ENCODE measurements at regions of chr1 and their contacts with region 1.

Region 1: GRCh38 chr1:20633190-20634064 is at the start of gene PINK1:
- DNase-seq: peak; percentile 91

Region 2: DNA sequence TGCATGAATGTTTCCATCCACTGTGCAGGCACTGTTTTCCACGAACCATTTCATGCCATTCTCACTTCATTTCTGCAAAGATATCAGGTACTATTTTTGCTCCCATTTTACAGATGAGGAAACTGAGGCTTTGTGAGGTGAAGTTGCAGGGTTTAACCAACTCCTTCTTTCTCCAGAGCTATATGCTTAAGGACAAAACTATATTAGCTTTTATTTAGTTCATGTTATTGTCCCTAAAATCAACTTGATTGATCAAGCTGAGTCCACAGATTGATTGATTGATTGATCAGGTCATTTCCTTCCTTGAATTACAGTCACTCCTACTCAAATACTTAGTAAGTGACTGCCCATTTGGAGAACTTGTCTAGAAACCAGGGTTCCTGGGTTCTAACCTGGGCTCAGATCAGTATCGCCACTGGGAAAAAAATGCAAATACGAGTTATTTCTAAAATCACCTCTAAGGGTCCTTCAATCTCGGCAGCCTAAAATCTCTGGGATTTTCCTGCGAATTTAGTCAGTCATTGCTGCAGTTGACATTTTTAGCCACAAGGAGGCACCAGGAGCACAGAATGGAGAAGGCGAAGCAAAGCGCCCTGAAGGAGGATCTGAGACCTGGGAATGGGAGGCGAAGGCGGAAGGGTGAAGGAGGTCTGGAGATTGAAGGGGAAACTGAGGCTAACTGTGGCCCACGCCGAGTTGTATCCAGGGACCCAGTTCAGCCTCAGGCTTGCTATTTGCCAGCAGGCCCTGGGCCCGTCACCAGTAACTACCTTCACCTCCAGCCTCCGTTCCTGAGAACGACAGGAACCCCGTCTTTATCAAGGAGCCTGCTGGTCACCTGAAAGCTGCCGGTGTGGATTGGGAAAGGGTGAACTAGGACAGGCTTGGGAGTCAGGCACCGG is 111.2 kb before region 1 on chr1:
- CTCF ChIA-PET with region 1: interaction called, 3 read pairs
- POLR2A ChIA-PET with region 1: interaction called, 12 read pairs
- DNase-seq: peak; percentile 81

Region 3: DNA sequence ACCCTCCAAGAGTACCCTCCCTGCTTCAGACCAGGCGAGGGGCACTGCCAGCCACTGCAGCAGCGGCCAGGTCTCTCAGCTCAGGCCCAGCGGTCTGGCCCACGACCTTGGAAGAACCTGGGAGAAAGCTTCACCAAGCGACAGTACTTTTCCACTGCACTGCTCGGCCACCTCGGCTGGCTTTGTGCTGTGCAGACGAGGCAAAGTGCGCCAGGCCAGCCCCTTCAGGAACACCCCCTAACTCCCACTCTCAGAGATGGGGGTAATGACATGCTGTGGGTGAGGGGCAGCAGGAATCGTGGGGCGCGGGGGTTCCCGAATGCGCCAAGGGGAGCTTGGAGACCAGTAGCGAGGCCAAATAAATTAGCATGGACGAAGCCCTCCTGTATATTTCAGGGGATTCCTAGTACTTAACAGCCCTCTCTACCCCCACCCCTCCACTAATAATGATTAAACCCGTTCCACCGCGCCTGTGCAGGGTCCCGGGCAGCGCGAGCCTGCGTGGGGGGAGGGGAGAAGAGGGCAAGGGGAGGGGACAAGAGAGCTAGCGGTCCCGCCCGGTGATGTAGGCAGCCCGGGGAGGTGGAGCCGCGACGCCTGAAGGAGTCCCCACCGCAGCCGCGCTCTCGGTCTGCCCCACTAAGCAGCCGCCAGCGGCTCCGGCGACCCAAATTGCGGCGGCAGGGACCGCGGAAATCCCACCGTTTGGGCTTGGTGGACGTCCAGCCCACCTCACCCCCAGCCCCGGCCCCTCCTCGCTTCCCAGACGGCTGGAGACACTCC is 81.3 kb before region 1 on chr1 and contains the start of gene FAM43B:
- CTCF ChIA-PET with region 1: interaction called, 3 read pairs
- POLR2A ChIA-PET with region 1: interaction called, 17 read pairs
- DNase-seq: peak; percentile 73

Region 4: GRCh38 chr1:20574686-20575540 is 58.5 kb before region 1 on chr1:
- CTCF ChIA-PET with region 1: interaction called, 39 read pairs
- POLR2A ChIA-PET with region 1: interaction called, 27 read pairs
- DNase-seq: peak; percentile 88

Region 5: DNA sequence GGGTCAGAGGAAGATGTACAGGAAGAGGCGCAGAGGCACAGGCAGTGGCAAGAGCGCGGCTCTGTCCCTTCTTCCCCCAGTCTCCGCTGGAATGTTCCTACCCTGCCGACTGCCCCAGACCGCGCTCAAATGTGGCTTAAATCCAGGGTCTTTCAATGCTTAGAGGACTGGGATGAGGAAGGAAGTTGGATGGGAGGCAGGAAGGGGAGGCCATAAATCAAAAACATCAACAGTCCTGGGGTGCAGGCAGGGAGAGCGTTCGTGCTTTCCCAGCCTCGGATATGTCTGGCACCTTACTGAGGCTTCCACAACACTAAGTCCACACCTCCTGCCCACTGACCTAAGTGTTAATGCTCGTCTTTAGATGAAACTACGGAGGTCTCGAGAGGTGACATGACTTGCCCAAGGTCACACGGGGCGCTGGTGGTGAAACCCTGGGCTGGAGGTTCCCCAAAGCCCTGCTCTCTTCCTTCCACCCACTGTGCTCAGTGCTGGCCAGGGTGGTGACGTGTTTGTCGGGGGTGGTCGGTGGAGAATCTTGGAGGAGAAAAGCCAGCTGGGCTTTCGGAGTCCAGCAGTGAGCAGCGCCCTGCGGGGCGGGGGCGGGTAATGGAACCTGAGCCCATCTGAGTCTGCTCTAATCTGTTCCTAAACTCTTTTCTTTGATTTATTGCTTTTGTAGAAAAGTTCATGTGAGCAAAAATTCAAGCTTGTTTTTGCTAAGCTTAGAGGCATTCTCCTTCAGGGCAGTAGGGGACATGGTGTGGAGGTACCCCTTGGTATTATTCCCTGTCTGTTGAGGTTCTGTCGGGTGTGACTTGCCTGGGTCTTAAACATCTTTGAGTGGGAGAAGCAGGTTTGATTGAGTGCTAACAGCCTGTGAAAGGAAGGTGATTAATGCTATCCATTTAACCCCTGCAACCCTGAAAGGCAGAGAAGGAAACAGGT is 43.8 kb before region 1 on chr1:
- CTCF ChIA-PET with region 1: interaction called, 4 read pairs
- POLR2A ChIA-PET with region 1: interaction called, 11 read pairs
- DNase-seq: peak; percentile 42

Region 6: DNA sequence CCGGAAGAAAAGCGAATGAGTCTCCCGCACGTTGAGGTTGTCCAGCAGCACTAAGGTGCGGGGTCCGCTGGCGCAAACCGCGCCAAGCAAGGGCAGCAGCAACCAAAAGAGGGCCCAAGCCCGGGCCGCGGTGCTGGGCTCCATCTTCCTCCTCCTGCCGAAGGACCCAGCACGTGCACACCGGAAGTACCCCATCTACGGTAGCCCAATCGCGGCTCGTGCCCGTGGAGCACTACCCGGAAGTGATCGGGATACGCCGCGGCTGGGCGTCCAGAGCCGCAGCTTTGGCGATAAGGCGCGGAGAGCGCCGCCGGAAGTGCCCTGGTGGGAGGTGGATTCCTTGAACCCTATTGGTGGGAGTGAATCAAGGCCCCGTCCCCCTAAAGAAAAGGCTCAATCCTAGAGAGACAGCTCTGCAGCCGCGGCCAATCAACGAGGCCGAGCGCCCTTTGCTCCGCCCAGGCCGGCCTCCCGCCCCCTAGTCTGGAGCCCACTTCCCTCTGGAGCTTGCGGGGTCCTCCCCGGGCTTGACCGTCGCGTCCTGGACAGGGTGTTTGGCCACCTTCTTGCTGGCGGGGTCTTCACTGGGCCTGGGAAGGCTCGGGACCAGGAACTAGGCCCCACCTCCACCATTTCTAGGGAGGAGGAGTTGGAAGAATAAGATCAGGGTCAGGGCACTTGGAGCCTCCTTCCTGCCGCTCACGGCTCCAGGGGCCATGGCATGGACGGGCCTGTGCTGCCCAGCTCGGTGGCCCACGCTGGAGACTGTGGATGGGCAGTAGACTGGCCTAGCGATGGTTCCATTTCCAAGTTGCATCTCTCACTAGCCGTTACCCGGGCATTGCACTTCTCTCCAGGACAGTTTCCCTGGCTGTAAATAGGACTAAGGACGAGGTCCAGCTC is 28.0 kb after region 1 on chr1 and contains the start of gene DDOST:
- CTCF ChIA-PET with region 1: interaction called, 6 read pairs
- POLR2A ChIA-PET with region 1: interaction called, 18 read pairs
- DNase-seq: peak; percentile 96